ENCODE measurements at regions of chr19 and their contacts with region 1.

Region 1: DNA sequence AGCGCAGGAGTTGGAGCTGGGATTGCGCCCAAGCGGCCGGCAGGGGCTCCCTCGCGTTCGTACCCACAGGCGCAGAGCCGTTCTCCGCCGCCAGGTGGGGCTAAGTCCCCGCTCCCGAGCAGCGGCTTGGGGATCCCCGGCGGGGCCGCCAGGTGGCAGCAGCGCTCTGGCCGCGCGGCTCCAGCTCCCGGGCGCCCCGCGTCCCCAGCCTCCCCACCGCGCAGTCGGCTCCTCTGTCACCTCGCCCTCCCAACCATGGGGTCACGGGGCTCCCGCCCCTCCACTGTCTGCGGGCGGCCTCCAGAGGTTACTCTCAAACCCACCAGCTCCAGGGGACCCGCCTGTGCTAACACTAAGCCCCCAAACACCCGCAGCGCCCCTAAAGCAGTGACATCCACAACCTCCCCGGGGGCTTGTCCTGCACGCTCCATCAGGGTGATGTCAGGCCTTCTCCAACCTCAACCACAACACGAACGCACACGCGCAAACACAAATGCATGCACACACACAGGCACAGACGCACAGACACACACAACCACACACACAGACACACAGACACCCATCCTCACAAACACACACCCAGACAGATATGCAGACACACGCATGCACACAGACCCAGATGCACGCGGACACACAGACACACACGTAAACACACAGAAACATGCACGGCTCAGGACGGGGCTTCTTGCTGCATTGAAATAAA is 18.4 kb upstream of the KCTD15 start:
- DNase-seq: peak; percentile 87
- H3K27ac ChIP-seq: no peak overlapping the region
- CTCF ChIP-seq: peak; percentile 100

Region 2: GRCh38 chr19:33788676-33789075 is 10.4 kb after region 1 on chr19:
- CTCF ChIA-PET with region 1: interaction called, 21 read pairs
- POLR2A ChIA-PET with region 1: no interaction called
- DNase-seq: no peak
- H3K27ac ChIP-seq: no peak overlapping the region
- CTCF ChIP-seq: no peak

Region 3: GRCh38 chr19:33795370-33796163 is 17.3 kb after region 1 on chr19:
- CTCF ChIA-PET with region 1: interaction called, 21 read pairs
- POLR2A ChIA-PET with region 1: no interaction called
- DNase-seq: peak; percentile 82
- H3K27ac ChIP-seq: peak overlapping the region; percentile 97
- CTCF ChIP-seq: peak; percentile 96

Region 4: DNA sequence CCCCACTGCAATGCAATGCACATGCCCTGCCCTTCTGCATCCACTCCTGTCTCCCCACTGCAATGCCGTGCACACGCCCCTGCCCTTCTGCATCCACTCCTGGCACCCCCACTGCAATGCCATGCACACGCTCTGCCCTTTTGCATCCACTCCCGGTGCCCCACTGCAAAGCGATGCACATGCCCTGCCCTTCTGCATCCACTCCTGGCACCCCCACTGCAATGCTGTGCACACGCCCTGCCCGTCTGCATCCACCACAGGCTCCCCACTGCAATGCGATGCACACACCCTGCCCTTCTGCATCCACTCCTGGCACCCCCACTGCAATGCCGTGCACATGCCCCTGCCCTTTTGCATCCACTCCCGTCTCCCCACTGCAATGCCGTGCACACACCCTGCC is 116.5 kb after region 1 on chr19:
- CTCF ChIA-PET with region 1: no interaction called
- POLR2A ChIA-PET with region 1: no interaction called
- DNase-seq: no peak
- H3K27ac ChIP-seq: no peak overlapping the region
- CTCF ChIP-seq: no peak

Region 5: DNA sequence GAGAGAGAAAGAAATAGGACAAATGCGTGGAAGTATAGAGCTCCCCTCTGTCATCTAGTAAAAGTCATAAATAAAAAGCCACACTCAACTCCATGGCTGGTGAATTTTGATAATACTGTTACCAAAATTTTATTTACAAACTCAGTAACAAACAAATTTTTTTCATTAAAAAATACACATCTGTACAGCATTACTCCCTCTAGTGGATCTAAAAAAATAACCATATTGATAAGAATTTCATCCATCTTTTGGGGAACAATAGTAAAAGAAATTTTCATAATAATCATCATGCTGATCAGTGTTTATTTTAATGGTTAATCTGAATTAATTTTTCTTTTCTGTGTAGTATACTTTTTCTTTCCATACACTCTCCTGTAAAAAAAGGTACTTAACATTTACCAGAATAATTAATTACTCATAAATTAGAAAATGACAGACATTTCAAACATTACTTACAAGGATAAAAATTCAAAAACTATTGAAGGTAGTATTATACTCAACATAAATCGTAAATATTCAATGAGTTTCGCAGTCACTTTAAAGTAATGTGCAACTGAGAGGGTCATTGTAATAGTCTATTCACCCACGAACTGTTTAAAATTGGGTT is 220.6 kb after region 1 on chr19:
- CTCF ChIA-PET with region 1: interaction called, 49 read pairs
- POLR2A ChIA-PET with region 1: no interaction called
- DNase-seq: peak; percentile 20
- H3K27ac ChIP-seq: no peak overlapping the region
- CTCF ChIP-seq: peak; percentile 60

Region 6: GRCh38 chr19:34096020-34096915 is 318.0 kb after region 1 on chr19:
- CTCF ChIA-PET with region 1: interaction called, 89 read pairs
- POLR2A ChIA-PET with region 1: no interaction called
- DNase-seq: peak; percentile 41
- H3K27ac ChIP-seq: no peak overlapping the region
- CTCF ChIP-seq: peak; percentile 66

Region 7: GRCh38 chr19:34145741-34146202 is 367.5 kb after region 1 on chr19:
- CTCF ChIA-PET with region 1: interaction called, 22 read pairs
- POLR2A ChIA-PET with region 1: no interaction called
- DNase-seq: peak; percentile 60
- H3K27ac ChIP-seq: no peak overlapping the region
- CTCF ChIP-seq: peak; percentile 86

Measured in RWPE1 (cell line).